Caco-2 (cell line): ENCODE measurements at regions of chr3 and their contacts with region 1.

Region 1: GRCh38 chr3:12658593-12659058 is 5.3 kb downstream of the RAF1 start:
- DNase-seq: no peak
- H3K4me3 ChIP-seq: no peak overlapping the region
- H3K4me3 Mint-ChIP-seq: no peak overlapping the region
- H3K27ac Mint-ChIP-seq: peak overlapping the region; percentile 42
- H3K4me1 ChIP-seq: peaks cover 24% of the 10 kb centered on the region
- H3K4me1 Mint-ChIP-seq: peaks cover 33% of the 10 kb centered on the region
- H3K27me3 ChIP-seq: no peaks in the 10 kb centered on the region
- H3K27me3 Mint-ChIP-seq: no peaks in the 10 kb centered on the region
- CTCF ChIP-seq: no peak

Region 2: DNA sequence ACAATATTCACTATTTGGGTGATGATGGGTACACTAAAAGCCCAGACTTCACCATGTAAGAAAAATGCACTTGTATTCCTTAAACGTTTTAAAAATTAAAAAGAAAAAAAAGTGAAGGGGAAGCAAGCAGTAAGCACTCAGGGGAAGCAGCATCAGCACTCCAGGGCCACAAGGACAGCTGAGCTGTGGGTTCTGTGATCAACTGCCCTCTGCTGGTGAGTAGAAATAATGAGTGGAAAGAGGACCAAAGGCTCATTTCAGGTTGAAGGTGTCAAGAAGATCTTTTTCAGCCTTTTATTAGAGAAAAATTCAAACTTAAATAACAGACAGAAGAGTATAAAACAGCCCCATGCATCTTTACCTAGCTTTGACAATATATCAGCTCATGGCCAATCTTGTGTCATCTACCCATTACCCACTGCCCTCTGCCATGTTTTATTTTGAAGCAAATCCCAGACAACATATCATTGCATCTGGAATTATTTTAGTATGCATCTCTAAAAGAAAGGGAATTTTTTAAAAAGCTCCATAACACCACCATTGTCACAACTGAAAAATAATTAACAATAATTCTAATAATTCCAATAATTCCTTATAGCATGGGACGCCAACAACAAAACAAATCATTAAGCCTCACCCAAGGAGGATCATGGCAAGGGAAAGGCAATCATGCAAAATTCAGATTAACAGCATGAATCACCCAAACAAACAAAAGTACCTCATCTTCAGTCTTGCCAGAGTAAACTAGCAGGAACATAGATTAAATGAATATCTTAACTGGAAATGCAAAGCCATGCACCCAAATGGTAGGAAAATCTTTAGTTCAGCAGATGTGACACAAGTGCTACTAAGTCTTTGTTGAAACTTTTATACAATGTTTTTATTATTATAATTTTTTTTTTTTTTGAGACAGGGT is 854.4 kb before region 1 on chr3:
- CTCF ChIA-PET with region 1: no interaction called
- POLR2A ChIA-PET with region 1: no interaction called
- intact Hi-C with region 1: no loop called
- DNase-seq: peak; percentile 47 to 55
- H3K4me3 ChIP-seq: no peak overlapping the region
- H3K4me3 Mint-ChIP-seq: no peak overlapping the region
- H3K27ac Mint-ChIP-seq: no peak overlapping the region
- H3K4me1 ChIP-seq: no peaks in the 10 kb centered on the region
- H3K4me1 Mint-ChIP-seq: no peaks in the 10 kb centered on the region
- H3K27me3 ChIP-seq: no peaks in the 10 kb centered on the region
- H3K27me3 Mint-ChIP-seq: no peaks in the 10 kb centered on the region
- CTCF ChIP-seq: peak; percentile 73 to 79

Region 3: DNA sequence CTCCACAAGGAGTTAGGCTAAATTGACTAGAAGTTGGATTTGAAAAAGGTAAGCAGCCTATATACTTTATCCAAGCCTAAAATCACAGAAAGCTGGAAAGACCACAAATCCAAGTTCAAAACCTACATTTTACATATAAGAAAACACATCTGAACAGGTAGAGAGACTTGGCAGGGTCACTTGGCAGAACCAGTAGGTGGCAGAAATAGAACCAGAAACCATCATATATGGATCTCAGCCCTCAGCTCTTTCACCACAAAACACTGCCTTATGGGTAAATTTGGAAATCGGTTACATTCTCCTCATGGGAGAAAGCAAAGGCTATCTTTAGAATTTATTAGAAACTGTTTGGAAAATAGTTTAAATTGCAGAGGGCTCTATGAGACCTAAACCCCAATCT is 57.6 kb before region 1 on chr3:
- CTCF ChIA-PET with region 1: interaction called, 3 read pairs
- POLR2A ChIA-PET with region 1: no interaction called
- intact Hi-C with region 1: loop called (anchors 10 kb)
- DNase-seq: no peak
- H3K4me3 ChIP-seq: no peak overlapping the region
- H3K4me3 Mint-ChIP-seq: no peak overlapping the region
- H3K27ac Mint-ChIP-seq: no peak overlapping the region
- H3K4me1 ChIP-seq: no peaks in the 10 kb centered on the region
- H3K4me1 Mint-ChIP-seq: no peaks in the 10 kb centered on the region
- H3K27me3 ChIP-seq: no peaks in the 10 kb centered on the region
- H3K27me3 Mint-ChIP-seq: no peaks in the 10 kb centered on the region
- CTCF ChIP-seq: peak in 1 of 2 experiments; percentile 28